K562 (cell line): ENCODE measurements at regions of chr6 and their contacts with region 1.

Region 1: DNA sequence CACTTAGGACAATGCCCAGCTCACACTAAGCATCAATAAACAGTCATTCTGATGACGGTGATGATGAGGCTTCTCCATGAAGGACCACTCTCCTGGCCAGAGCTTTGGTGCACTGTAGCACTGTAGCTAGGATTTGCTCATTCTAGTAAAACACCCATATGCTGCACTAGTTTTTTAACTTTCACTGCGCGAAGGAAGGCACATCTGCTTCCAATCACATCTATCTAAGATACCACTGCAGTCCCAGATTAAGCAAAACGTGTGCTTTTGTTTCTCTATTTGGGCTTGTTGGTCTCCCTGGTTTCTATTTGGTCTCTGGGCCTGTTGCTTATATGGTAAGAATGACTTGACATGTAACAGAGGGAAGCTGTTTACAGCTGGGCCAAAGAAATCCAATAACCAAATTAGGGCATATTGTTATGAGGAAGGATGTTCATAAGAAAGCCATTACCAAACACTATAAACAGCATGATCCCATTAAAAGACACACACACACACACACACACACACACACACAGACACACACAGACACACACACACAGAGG is 62.4 kb downstream of the FAM229B start:
- DNase-seq: no peak
- ATAC-seq: no peak
- H3K4me3 ChIP-seq: no peak overlapping the region
- H3K27ac ChIP-seq: no peak overlapping the region
- H3K4me1 ChIP-seq: no peaks in the 10 kb centered on the region
- H3K27me3 ChIP-seq: peaks cover 0 to 6% of the 10 kb centered on the region in 2 experiments; a peak in 3 of 5 replicates
- CTCF ChIP-seq: no peak
- EP300 ChIP-seq: no peak
- POLR2A ChIP-seq: no peak
- RAD21 ChIP-seq: no peak

Region 2: DNA sequence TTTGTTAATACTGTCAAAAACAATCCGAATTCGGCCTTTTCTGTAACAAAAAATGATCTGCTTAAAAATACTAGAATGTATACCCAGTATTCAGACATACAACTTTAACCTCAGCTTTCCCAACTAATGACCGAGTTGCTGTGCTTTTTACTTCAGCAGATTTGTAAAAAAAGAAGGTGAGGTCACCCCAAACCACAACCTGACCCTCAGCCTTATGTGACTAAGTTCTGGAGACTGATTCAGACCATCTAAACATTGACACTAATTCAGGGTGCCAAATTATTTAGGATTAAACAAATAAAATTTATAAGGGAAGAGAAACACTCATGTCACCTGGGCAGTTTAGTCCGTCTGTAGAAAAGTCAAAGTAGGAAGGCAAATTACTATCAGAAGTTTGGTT is 88.2 kb before region 1 on chr6:
- CTCF ChIA-PET with region 1: no interaction called
- POLR2A ChIA-PET with region 1: no interaction called
- in situ Hi-C with region 1: no loop called
- intact Hi-C with region 1: no loop called
- DNase-seq: no peak
- ATAC-seq: no peak
- H3K4me3 ChIP-seq: no peak overlapping the region
- H3K27ac ChIP-seq: no peak overlapping the region
- H3K4me1 ChIP-seq: no peaks in the 10 kb centered on the region
- H3K27me3 ChIP-seq: peaks cover 0 to 4% of the 10 kb centered on the region in 2 experiments; a peak in 3 of 5 replicates
- CTCF ChIP-seq: no peak
- EP300 ChIP-seq: no peak
- POLR2A ChIP-seq: no peak
- RAD21 ChIP-seq: no peak

Region 3: DNA sequence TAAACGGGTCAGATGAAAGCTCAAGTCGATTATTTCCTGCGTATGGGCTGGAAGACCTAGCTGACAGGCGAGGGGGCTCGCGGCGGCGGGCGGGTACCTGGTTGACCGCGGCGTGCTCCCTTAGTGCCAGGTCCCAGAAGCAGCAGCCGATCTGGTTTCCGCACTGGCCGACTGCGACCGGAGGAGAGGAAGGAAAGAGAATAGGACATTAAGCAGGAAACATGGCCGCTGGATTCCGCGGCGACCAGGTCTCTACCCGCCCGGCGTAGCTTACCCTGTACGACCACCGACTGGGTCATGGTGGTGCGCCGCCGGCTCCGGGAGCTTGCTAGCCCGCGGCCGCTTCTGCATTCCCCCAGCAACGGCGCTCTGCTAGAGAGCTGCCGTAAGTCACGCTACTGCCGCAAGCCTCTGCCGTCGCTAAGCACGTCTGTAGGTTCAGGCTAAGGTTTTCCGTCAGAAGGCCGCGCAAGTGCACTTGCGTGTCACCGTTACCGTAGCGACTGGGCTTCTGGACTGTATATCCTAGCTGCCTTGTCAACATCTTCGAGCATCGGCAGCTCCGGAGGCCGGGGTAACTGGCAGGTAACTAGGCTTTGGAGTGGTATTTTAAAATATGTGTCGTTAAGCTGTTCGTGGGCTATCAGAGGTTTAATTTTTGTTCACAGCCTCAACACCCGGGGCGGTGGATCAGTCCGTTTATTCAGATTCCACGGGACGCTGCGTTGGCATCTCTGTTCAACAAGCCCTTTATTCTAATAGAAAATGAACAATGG is 62.5 kb before region 1 on chr6 and contains the starts of genes FAM229B and TUBE1:
- CTCF ChIA-PET with region 1: no interaction called
- POLR2A ChIA-PET with region 1: interaction called, 3 read pairs
- in situ Hi-C with region 1: no loop called
- intact Hi-C with region 1: loop called (anchors 5 kb)
- DNase-seq: peak; percentile 81 to 96 (median 84)
- ATAC-seq: peak; percentile 97
- H3K4me3 ChIP-seq: peak within 1 kb of the TSS; percentile 62
- H3K27ac ChIP-seq: peak within 1 kb of the TSS; percentile 67
- H3K4me1 ChIP-seq: no peaks in the 10 kb centered on the region; a peak in 1 of 5 replicates
- H3K27me3 ChIP-seq: peaks cover 0 to 2% of the 10 kb centered on the region in 2 experiments; a peak in 2 of 5 replicates
- CTCF ChIP-seq: peak in 1 of 3 experiments; percentile 7; a peak in 1 of 6 replicates
- EP300 ChIP-seq: no peak
- POLR2A ChIP-seq: peak; percentile 93
- RAD21 ChIP-seq: no peak
- polyA plus RNA-seq, gene FAM229B: 12.6 to 14.6 TPM
- polyA plus RNA-seq, gene TUBE1: 18.9 to 21.6 TPM